IMR-90 (cell line): ENCODE measurements at regions of chr16 and their contacts with region 1.

Region 1: DNA sequence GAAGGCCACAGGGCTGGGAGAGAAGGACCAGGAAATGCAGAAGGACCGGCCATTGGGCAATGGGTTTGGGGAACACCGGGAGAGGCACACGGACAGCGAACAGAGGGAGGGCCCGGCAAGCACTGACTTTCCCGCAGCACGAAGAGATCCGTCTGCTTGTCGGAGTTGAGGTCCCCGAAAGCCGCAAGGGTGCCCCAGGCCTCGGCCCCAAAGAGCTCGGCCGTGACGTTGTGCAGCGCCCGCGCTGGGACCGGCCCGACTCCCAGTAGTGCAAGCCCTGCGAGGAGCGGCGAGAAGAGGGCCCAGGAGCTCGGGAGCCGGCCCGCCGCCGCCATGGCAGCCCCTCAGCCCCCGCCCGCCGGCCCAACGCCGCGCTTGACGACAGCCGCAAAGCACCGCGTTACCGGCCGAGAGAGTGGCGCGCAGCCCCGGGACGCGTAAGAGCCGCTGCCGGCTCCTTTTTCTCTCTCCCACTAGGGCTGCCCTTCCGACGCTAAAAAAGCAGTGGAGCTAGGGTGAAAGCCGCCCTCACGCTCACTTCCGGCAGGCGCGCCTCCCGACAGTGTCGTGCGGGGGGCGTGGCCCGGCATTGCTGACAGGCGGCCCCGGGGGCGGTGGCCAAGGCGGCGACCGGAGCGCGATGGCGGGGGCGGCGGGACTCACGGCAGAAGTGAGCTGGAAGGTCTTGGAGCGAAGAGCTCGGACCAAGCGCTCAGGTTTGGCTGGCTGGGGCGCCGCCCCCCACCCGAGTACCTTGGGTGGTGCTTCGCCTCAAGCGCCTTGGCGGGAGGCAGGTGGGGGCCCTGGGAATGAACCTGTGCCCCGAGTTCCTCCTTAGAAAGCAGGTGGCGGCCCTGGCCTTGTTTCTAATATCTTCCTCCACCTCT is at the starts of genes ITFG1 and PHKB:
- DNase-seq: peak; percentile 90
- ATAC-seq: peak; percentile 95
- H3K4me3 ChIP-seq: peak within 1 kb of the TSS; percentile 84
- H3K27ac ChIP-seq: peak within 1 kb of the TSS; percentile 87
- H3K4me1 ChIP-seq: peaks cover 4% of the 10 kb centered on the region; the same call in 1 of the 2 replicates
- H3K27me3 ChIP-seq: no peaks in the 10 kb centered on the region
- CTCF ChIP-seq: peak; percentile 19; the same call in 1 of the 2 replicates
- POLR2A ChIP-seq: peak; percentile 83
- RAD21 ChIP-seq: no peak; the same call in none of the 2 replicates
- total RNA-seq, gene ITFG1: 57.5 and 60.4 TPM in 2 replicates
- total RNA-seq, gene PHKB: 58.6 and 60.0 TPM in 2 replicates

Region 2: GRCh38 chr16:47533744-47534292 is 72.9 kb after region 1 on chr16:
- CTCF ChIA-PET with region 1: no interaction called
- POLR2A ChIA-PET with region 1: no interaction called
- dilution Hi-C with region 1: no loop called
- in situ Hi-C with region 1: no loop called
- intact Hi-C with region 1: no loop called
- DNase-seq: no peak
- ATAC-seq: no peak
- H3K4me3 ChIP-seq: no peak overlapping the region
- H3K27ac ChIP-seq: no peak overlapping the region
- H3K4me1 ChIP-seq: no peaks in the 10 kb centered on the region
- H3K27me3 ChIP-seq: no peaks in the 10 kb centered on the region
- CTCF ChIP-seq: no peak
- POLR2A ChIP-seq: no peak
- RAD21 ChIP-seq: no peak

Region 3: GRCh38 chr16:47732523-47733111 is 271.7 kb after region 1 on chr16:
- CTCF ChIA-PET with region 1: no interaction called
- POLR2A ChIA-PET with region 1: no interaction called
- dilution Hi-C with region 1: no loop called
- in situ Hi-C with region 1: no loop called
- intact Hi-C with region 1: loop called (anchors 10 kb)
- DNase-seq: peak; percentile 99
- ATAC-seq: peak; percentile 66
- H3K4me3 ChIP-seq: no peak overlapping the region
- H3K27ac ChIP-seq: peak overlapping the region; percentile 76; the same call in 1 of the 2 replicates
- H3K4me1 ChIP-seq: peaks cover 12% of the 10 kb centered on the region
- H3K27me3 ChIP-seq: no peaks in the 10 kb centered on the region
- CTCF ChIP-seq: no peak
- POLR2A ChIP-seq: no peak
- RAD21 ChIP-seq: no peak

Region 4: DNA sequence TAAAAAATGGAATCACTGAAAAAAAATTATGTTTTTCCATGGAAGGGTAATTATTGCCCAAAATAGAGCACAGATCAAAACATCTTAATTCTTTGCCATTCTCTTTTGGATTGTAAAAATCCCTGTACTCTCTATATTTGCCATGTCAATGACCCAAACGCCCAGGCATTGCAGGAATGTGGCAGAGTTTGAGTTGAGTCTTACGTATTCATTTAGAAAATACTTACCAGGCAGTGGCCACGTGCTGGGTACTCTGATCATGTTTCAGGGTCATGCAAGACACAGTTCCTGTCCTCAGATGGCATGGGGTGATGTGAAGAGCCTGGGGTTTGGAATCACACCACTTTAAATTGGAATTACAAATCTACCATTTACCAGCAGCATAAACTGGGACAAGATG is 427.2 kb after region 1 on chr16:
- CTCF ChIA-PET with region 1: interaction called, 3 read pairs
- POLR2A ChIA-PET with region 1: no interaction called
- dilution Hi-C with region 1: no loop called
- in situ Hi-C with region 1: no loop called
- intact Hi-C with region 1: loop called (anchors 10 kb)
- DNase-seq: peak; percentile 49
- ATAC-seq: peak; percentile 71
- H3K4me3 ChIP-seq: no peak overlapping the region
- H3K27ac ChIP-seq: no peak overlapping the region
- H3K4me1 ChIP-seq: peaks cover 6% of the 10 kb centered on the region
- H3K27me3 ChIP-seq: no peaks in the 10 kb centered on the region
- CTCF ChIP-seq: no peak
- POLR2A ChIP-seq: no peak
- RAD21 ChIP-seq: no peak